Calu3 (cell line): ENCODE measurements at regions of chr2 and their contacts with region 1.

Region 1: DNA sequence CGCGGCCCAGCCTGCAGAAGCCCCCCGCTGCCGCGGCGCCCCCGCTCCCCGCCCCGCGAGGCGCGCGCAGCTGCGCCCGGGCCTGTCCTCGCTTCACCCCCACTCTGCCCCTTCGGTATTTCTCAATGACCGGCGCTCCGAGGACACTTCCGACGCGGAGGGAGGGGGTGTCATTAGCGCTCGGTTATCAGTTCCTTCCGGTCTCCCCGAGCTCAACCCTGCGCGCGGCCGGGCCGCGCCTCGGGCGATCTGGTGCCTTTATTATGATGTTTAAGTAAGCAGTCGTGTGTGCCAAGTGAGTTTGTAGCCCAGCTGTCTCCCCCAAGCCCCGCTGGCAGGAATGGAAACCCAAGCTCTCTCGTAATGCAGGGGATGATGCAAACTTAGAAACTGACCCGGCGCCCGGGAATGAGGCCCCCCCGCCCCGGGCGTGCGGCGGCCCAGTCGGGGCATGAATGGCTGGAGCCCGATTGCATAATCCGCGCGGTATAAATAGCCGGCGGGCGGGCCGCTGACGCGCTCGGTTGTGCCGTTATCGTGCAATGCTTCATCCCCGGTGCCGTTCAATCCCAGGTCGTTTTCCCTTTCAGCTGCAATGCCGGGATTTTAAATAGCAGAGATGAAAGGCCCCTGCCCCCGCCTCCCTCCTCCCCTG is 3.9 kb upstream of the SPRED2 start:
- DNase-seq: peak; percentile 76
- H3K4me3 Mint-ChIP-seq: peak overlapping the region; percentile 87
- H3K27ac Mint-ChIP-seq: peak overlapping the region; percentile 68
- H3K4me1 Mint-ChIP-seq: peaks cover 14% of the 10 kb centered on the region
- H3K27me3 Mint-ChIP-seq: no peaks in the 10 kb centered on the region
- CTCF ChIP-seq: no peak

Region 2: GRCh38 chr2:65264821-65265670 is 171.2 kb before region 1 on chr2:
- CTCF ChIA-PET with region 1: interaction called, 4 read pairs
- intact Hi-C with region 1: loop called (anchors 5 kb)
- DNase-seq: peak; percentile 43
- H3K4me3 Mint-ChIP-seq: no peak overlapping the region
- H3K27ac Mint-ChIP-seq: no peak overlapping the region
- H3K4me1 Mint-ChIP-seq: no peaks in the 10 kb centered on the region
- H3K27me3 Mint-ChIP-seq: no peaks in the 10 kb centered on the region
- CTCF ChIP-seq: peak; percentile 55